ENCODE measurements at regions of chr12 and their contacts with region 1.

Region 1: GRCh38 chr12:120292661-120293531 is at the start of gene RNU4-1:
- DNase-seq: peak; percentile 93
- H3K4me3 Mint-ChIP-seq: no peak within 1 kb of the TSS
- H3K27ac Mint-ChIP-seq: no peak within 1 kb of the TSS
- H3K4me1 Mint-ChIP-seq: peaks cover 3% of the 10 kb centered on the region
- H3K27me3 Mint-ChIP-seq: peaks cover 3% of the 10 kb centered on the region
- total RNA-seq, gene RNU4-1: 2,196 and 2,563 TPM in 2 replicates

Region 2: DNA sequence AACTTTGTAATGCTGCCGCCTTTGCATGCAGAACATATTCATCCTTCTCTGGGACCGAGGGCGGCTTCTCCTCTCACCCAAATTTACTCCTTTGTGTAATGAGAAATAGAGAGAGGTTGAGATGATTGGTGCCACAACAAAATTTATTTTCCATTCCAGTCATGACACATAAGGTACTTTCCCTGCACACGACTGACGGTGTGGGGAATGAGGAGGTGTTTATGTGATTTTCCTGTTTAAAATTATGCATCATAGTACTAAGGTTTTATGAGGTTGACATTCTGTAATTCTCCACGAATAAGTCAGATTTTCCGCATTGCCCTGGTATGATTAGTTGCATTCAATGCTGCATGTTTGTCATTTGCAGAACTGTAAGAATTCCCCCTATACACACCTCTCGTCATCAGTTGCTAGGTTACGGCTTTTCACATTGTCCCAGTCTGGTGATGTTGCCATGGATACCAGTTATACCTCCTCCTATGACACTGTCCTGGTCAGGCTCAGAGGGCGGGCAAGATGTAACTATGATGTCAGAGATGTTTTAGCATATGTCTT is 280.8 kb before region 1 on chr12:
- intact Hi-C with region 1: loop called (anchors 2 kb)
- DNase-seq: peak; percentile 95
- H3K4me3 Mint-ChIP-seq: peak overlapping the region; percentile 75
- H3K27ac Mint-ChIP-seq: peak overlapping the region; percentile 96
- H3K4me1 Mint-ChIP-seq: peaks cover 70% of the 10 kb centered on the region
- H3K27me3 Mint-ChIP-seq: no peaks in the 10 kb centered on the region

Region 3: GRCh38 chr12:120228291-120229070 is 64.4 kb before region 1 on chr12:
- intact Hi-C with region 1: loop called (anchors 1 kb)
- DNase-seq: peak; percentile 96
- H3K4me3 Mint-ChIP-seq: peak overlapping the region; percentile 65
- H3K27ac Mint-ChIP-seq: peak overlapping the region; percentile 79
- H3K4me1 Mint-ChIP-seq: peaks cover 74% of the 10 kb centered on the region
- H3K27me3 Mint-ChIP-seq: no peaks in the 10 kb centered on the region

Region 4: GRCh38 chr12:120252071-120252906 is 40.6 kb before region 1 on chr12:
- intact Hi-C with region 1: loop called (anchors 1 kb)
- DNase-seq: peak; percentile 92
- H3K4me3 Mint-ChIP-seq: peak overlapping the region; percentile 67
- H3K27ac Mint-ChIP-seq: peak overlapping the region; percentile 70
- H3K4me1 Mint-ChIP-seq: peaks cover 74% of the 10 kb centered on the region
- H3K27me3 Mint-ChIP-seq: no peaks in the 10 kb centered on the region

Region 5: GRCh38 chr12:120317224-120318105 is 24.6 kb after region 1 on chr12:
- intact Hi-C with region 1: loop called (anchors 1 kb)
- DNase-seq: peak; percentile 100
- H3K4me3 Mint-ChIP-seq: peak overlapping the region; percentile 93
- H3K27ac Mint-ChIP-seq: peak overlapping the region; percentile 95
- H3K4me1 Mint-ChIP-seq: peaks cover 12% of the 10 kb centered on the region
- H3K27me3 Mint-ChIP-seq: peaks cover 5% of the 10 kb centered on the region

Region 6: GRCh38 chr12:120327593-120327992 is 34.7 kb after region 1 on chr12 and contains the start of gene PLA2G1B:
- intact Hi-C with region 1: loop called (anchors 2 kb)
- DNase-seq: no peak
- H3K4me3 Mint-ChIP-seq: no peak within 1 kb of the TSS
- H3K27ac Mint-ChIP-seq: no peak within 1 kb of the TSS
- H3K4me1 Mint-ChIP-seq: peaks cover 9% of the 10 kb centered on the region
- H3K27me3 Mint-ChIP-seq: peaks cover 8% of the 10 kb centered on the region
- total RNA-seq, gene PLA2G1B: not detected in 2 replicates

Region 7: GRCh38 chr12:120514002-120514401 is 221.1 kb after region 1 on chr12:
- intact Hi-C with region 1: no loop called
- DNase-seq: no peak
- H3K4me3 Mint-ChIP-seq: no peak overlapping the region
- H3K27ac Mint-ChIP-seq: no peak overlapping the region
- H3K4me1 Mint-ChIP-seq: no peaks in the 10 kb centered on the region
- H3K27me3 Mint-ChIP-seq: no peaks in the 10 kb centered on the region

Region 8: GRCh38 chr12:120669055-120669840 is 376.4 kb after region 1 on chr12:
- intact Hi-C with region 1: no loop called
- DNase-seq: no peak
- H3K4me3 Mint-ChIP-seq: no peak overlapping the region
- H3K27ac Mint-ChIP-seq: no peak overlapping the region
- H3K4me1 Mint-ChIP-seq: no peaks in the 10 kb centered on the region
- H3K27me3 Mint-ChIP-seq: peaks cover 2% of the 10 kb centered on the region

Measured in activated CD4-positive, alpha-beta T cell treated with anti-CD3 and anti-CD28 coated beads, Interleukin-2, amount 10 ng/mL, durations not matched to agents 24 days and 14 days (primary cell).